H1 (cell line): ENCODE measurements at regions of chr1 and their contacts with region 1.

Region 1: DNA sequence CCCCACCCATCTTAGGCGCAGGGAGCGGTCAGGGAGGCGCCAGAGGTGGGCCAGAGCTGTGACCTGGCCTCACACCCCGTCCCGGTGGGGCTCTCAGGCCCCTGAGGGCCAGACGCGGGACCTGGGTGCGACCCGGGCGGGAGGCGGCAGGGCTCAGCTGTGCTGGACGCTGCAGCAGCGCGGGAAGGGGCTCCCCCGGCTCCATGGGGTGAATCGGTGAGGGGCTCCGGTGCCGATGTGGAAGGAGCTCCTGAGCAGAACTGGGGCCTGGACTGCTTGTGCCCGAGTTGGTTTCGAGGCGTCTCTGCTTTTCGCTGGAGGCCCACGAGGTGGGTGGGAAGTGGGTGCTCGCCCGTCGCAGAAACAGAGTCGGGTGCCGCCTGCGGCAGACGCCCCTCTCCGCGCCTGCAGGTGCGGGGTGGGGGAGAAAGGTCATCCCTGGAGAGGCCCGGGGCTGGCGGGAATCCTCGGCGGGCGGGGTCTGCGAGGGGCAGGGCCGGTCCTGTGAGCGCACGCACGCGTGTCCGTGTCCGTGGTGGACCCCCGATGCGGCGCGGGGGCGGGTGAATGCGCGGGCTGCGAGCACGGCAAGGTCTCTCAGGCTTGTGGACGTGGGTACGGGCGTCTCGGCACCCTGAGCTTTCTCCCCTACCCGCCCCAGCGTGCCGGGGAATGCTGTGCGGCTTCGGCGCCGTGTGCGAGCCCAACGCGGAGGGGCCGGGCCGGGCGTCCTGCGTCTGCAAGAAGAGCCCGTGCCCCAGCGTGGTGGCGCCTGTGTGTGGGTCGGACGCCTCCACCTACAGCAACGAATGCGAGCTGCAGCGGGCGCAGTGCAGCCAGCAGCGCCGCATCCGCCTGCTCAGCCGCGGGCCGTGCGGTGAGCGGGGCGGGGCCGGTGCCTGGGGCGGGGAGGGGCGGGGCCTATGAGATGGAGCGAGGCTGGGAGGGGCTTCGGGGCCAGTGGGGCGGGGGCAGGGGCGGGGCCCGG is 20.4 kb downstream of the AGRN start:
- DNase-seq: peak in 1 of 2 experiments; percentile 76
- H3K4me3 ChIP-seq: peak overlapping the region; percentile 11 to 63 (median 30); a peak in 7 of 8 replicates
- H3K27ac ChIP-seq: no peak overlapping the region
- H3K4me1 ChIP-seq: peaks cover 0 to 10% (median 2%) of the 10 kb centered on the region in 4 experiments; a peak in 4 of 7 replicates
- H3K27me3 ChIP-seq: peaks cover 0 to 29% (median 21%) of the 10 kb centered on the region in 4 experiments; a peak in 5 of 7 replicates
- CTCF ChIP-seq: peak in 2 of 3 experiments; percentile 1 to 28; a peak in 3 of 4 replicates
- EP300 ChIP-seq: no peak
- POLR2A ChIP-seq: no peak
- RAD21 ChIP-seq: peak in 1 of 2 experiments; percentile 27; a peak in 1 of 4 replicates

Region 2: GRCh38 chr1:904310-904950 is 135.9 kb before region 1 on chr1:
- CTCF ChIA-PET with region 1: no interaction called
- POLR2A ChIA-PET with region 1: no interaction called
- DNase-seq: peak in 1 of 2 experiments; percentile 96
- H3K4me3 ChIP-seq: peak overlapping the region in 2 of 4 experiments; percentile 28 to 64; a peak in 3 of 8 replicates
- H3K27ac ChIP-seq: no peak overlapping the region
- H3K4me1 ChIP-seq: peaks cover 0 to 5% (median 2%) of the 10 kb centered on the region in 4 experiments; a peak in 4 of 7 replicates
- H3K27me3 ChIP-seq: peaks cover 24 to 42% (median 36%) of the 10 kb centered on the region in 4 experiments
- CTCF ChIP-seq: peak; percentile 77 to 90 (median 82)
- EP300 ChIP-seq: peak in 1 of 2 experiments; percentile 57; a peak in 1 of 3 replicates
- POLR2A ChIP-seq: peak in 1 of 2 experiments; percentile 58; a peak in 1 of 3 replicates
- RAD21 ChIP-seq: peak; percentile 70 to 85

Region 3: GRCh38 chr1:1013105-1013921 is 27.0 kb before region 1 on chr1 and contains the start of gene ISG15:
- CTCF ChIA-PET with region 1: interaction called, 16 read pairs
- POLR2A ChIA-PET with region 1: interaction called, 245 read pairs
- DNase-seq: peak in 1 of 2 experiments; percentile 86
- H3K4me3 ChIP-seq: peak within 1 kb of the TSS; percentile 37 to 64 (median 59)
- H3K27ac ChIP-seq: peak within 1 kb of the TSS; percentile 61; the same call in 1 of the 2 replicates
- H3K4me1 ChIP-seq: peaks cover 0 to 21% (median 15%) of the 10 kb centered on the region in 4 experiments; a peak in 6 of 7 replicates
- H3K27me3 ChIP-seq: peaks cover 0 to 3% (median 0%) of the 10 kb centered on the region in 4 experiments; a peak in 3 of 7 replicates
- CTCF ChIP-seq: no peak
- EP300 ChIP-seq: no peak
- POLR2A ChIP-seq: peak in 1 of 2 experiments; percentile 53; a peak in 1 of 3 replicates
- RAD21 ChIP-seq: no peak
- total RNA-seq, gene ISG15: 27.7 and 29.3 TPM in 2 replicates

Region 4: GRCh38 chr1:1019122-1019999 is 20.9 kb before region 1 on chr1:
- CTCF ChIA-PET with region 1: interaction called, 16 read pairs
- POLR2A ChIA-PET with region 1: interaction called, 245 read pairs
- DNase-seq: peak in 1 of 2 experiments; percentile 84
- H3K4me3 ChIP-seq: peak overlapping the region in 2 of 4 experiments; percentile 45 to 83; a peak in 2 of 8 replicates
- H3K27ac ChIP-seq: no peak overlapping the region; the same call in 1 of the 2 replicates
- H3K4me1 ChIP-seq: peaks cover 2 to 36% (median 27%) of the 10 kb centered on the region in 4 experiments
- H3K27me3 ChIP-seq: no peaks in the 10 kb centered on the region
- CTCF ChIP-seq: peak in 2 of 3 experiments; percentile 38 to 42; a peak in 2 of 4 replicates
- EP300 ChIP-seq: no peak
- POLR2A ChIP-seq: no peak; a peak in 1 of 3 replicates
- RAD21 ChIP-seq: no peak

Region 5: DNA sequence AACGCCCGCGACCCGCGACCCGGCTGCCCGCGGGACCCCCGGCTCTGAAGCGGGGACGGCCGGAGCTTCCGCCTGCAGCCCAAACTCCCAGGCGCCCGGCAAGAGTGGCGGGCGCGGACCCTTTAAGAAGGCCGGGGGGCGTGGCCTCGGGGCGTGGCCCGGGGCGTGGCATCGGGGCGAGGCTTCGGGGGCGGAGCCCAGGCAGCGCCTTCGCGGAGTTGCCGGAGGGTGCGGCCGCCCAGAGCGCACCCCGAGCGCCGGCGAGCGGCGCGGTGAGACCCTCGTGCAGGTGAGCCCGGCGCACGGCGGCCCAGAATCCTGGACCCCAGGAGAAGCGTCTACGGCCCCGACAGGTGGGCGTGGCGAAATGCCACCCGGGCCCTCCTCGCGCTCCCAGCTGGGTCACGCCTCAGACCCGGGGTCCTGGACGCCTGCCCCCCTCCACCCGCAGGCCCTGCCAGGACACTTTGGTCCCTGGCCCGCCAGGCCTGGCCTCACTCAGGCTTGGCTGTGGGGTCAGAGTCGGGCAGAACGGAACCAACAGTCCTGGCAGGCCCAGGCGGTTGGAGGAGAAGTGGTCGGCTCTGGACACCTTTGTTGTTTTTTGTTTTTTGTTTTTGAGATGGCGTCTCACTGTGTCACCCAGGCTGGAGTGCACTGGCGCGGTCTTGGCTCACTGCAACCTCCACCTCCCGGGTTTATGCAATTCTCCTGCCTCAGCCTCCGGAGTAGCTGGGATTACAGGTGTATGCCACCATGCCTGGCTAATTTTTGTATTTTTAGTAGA is 19.4 kb after region 1 on chr1:
- CTCF ChIA-PET with region 1: interaction called, 70 read pairs
- POLR2A ChIA-PET with region 1: interaction called, 70 read pairs
- DNase-seq: peak in 1 of 2 experiments; percentile 98
- H3K4me3 ChIP-seq: peak overlapping the region; percentile 43 to 76 (median 48)
- H3K27ac ChIP-seq: no peak overlapping the region
- H3K4me1 ChIP-seq: peaks cover 0 to 18% (median 11%) of the 10 kb centered on the region in 4 experiments; a peak in 5 of 7 replicates
- H3K27me3 ChIP-seq: peaks cover 9 to 49% (median 34%) of the 10 kb centered on the region in 4 experiments
- CTCF ChIP-seq: no peak
- EP300 ChIP-seq: no peak
- POLR2A ChIP-seq: no peak
- RAD21 ChIP-seq: no peak

Region 6: DNA sequence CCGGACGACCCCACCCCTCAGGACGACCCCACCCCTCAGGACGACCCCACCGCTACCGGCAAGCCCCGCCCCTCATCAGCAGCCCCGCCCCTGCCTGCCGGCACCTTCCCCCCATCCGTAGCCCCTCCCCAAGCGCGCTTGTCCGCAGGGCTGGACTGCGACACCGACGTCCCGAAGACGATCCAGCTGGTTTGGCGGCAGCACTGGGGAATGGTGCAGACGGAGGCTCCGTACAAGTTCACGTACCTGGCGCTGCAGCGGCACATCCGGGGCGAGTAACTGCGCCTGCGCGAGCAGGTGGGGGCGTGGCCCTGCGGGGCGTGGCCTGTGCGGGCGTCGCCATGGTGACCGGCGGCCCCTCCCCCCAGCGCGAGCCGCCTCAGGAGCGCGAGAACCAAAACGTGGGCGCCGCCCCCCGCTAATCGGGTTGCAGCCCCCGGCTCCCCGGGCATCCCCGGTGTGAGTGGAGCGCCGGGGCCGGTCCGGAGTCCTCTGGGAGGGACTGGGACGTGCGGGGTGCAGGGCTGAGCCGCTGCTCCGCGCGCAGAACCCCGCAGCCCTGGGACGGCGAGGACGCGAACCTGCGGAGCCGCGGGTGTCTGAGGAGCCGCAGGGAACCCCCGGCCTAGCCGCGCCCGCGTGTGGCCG is 28.9 kb after region 1 on chr1:
- CTCF ChIA-PET with region 1: interaction called, 70 read pairs
- POLR2A ChIA-PET with region 1: interaction called, 11 read pairs
- DNase-seq: peak; percentile 68 to 99
- H3K4me3 ChIP-seq: peak overlapping the region; percentile 58 to 83 (median 72)
- H3K27ac ChIP-seq: no peak overlapping the region
- H3K4me1 ChIP-seq: peaks cover 0 to 9% (median 2%) of the 10 kb centered on the region in 4 experiments; a peak in 5 of 7 replicates
- H3K27me3 ChIP-seq: peaks cover 1 to 19% (median 10%) of the 10 kb centered on the region in 4 experiments; a peak in 6 of 7 replicates
- CTCF ChIP-seq: no peak
- EP300 ChIP-seq: no peak
- POLR2A ChIP-seq: no peak
- RAD21 ChIP-seq: no peak